Head of caudate nucleus (tissue), 42 donors: ENCODE measurements at regions of chr12 and their contacts with region 1.

Region 1: GRCh38 chr12:7219599-7220243 is 30.2 kb downstream of the PEX5 start:
- DNase-seq: peak; percentile 34 to 92 (median 79)

Region 2: GRCh38 chr12:7459973-7460372 is 240.3 kb after region 1 on chr12:
- intact Hi-C with region 1: loop called (anchors 5 kb)
- DNase-seq: no peak

Region 3: GRCh38 chr12:7638760-7639555 is 419.2 kb after region 1 on chr12:
- intact Hi-C with region 1: loop called (anchors 2 kb)
- DNase-seq: peak; percentile 47 to 94 (median 81)